ENCODE measurements at regions of chr2 and their contacts with region 1.

Region 1: DNA sequence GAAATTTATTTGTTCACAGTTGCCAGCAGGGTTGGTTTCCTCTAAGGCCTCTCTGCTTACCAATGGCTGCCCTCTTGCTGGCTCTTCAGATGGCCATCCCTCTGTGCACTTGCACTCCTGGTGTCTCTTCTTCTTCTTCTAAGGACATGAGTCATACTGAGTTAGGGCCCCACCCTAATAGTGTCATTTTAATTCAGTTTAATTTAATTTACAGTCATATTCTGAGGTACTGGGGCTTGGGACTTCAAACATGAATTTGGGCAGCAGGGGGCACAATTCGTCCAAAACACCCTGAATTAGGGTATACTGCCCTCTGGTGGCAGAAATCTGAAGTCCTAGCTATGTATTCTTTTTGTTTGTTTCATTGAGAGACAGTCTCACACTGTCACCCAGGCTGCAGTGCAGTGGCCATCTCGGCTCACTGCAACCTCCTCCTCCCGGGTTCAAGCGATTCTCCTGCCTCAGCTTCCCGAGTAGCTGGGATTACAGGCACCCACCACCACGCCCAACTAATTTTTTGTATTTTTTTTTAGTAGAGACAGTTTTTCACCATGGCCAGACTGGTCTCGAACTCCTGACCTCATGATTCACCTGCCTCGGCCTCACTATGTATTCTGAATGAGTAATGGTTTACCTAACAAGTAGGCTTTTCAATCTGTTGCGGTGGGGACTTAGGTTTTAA is 19.8 kb downstream of the SLC4A1AP start:
- DNase-seq: peak; percentile 70 to 93
- H3K4me3 ChIP-seq: no peak overlapping the region
- H3K27ac ChIP-seq: no peak overlapping the region
- H3K4me1 ChIP-seq: no peaks in the 10 kb centered on the region
- H3K27me3 ChIP-seq: no peaks in the 10 kb centered on the region
- CTCF ChIP-seq: peak; percentile 35 to 100 (median 96)
- EP300 ChIP-seq: no peak
- POLR2A ChIP-seq: no peak
- RAD21 ChIP-seq: peak; percentile 68 to 77

Region 2: DNA sequence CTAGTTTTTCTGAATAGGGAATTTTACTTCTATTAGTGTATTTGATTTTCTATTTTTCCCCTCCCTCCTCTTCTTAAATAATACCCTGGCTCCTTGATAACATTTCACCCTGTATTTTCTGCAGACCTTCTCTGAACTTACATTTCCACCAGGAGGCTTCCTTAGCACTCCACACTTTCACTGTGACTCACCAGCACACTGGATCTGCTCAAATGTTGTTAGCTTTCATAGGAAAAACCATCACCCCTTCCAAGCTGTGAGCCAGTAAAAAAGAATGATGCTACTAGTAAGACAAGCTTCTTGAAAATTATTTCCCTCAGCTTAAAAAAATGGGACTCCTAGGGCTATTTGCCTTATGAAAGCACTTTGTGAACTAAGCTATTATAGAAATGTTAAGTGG is 36.2 kb before region 1 on chr2:
- CTCF ChIA-PET with region 1: interaction called, 22 read pairs
- POLR2A ChIA-PET with region 1: interaction called, 3 read pairs
- DNase-seq: no peak
- H3K4me3 ChIP-seq: no peak overlapping the region
- H3K27ac ChIP-seq: no peak overlapping the region
- H3K4me1 ChIP-seq: no peaks in the 10 kb centered on the region
- H3K27me3 ChIP-seq: no peaks in the 10 kb centered on the region
- CTCF ChIP-seq: no peak
- EP300 ChIP-seq: no peak
- POLR2A ChIP-seq: no peak
- RAD21 ChIP-seq: no peak

Region 3: GRCh38 chr2:27663463-27664249 is 19.9 kb before region 1 on chr2 and contains the starts of genes SLC4A1AP and SUPT7L:
- CTCF ChIA-PET with region 1: interaction called, 34 read pairs
- POLR2A ChIA-PET with region 1: interaction called, 3 read pairs
- DNase-seq: peak; percentile 21 to 87
- H3K4me3 ChIP-seq: peak within 1 kb of the TSS; percentile 50 to 100 (median 88)
- H3K27ac ChIP-seq: peak within 1 kb of the TSS; percentile 95
- H3K4me1 ChIP-seq: peaks cover 0 to 1% (median 0%) of the 10 kb centered on the region in 4 experiments; a peak in 2 of 7 replicates
- H3K27me3 ChIP-seq: no peaks in the 10 kb centered on the region
- CTCF ChIP-seq: peak in 1 of 3 experiments; percentile 5; a peak in 1 of 4 replicates
- EP300 ChIP-seq: no peak
- POLR2A ChIP-seq: peak; percentile 47 to 88
- RAD21 ChIP-seq: no peak
- total RNA-seq, gene SLC4A1AP: 18.4 and 18.8 TPM in 2 replicates
- total RNA-seq, gene SUPT7L: 21.8 and 22.2 TPM in 2 replicates

Region 4: DNA sequence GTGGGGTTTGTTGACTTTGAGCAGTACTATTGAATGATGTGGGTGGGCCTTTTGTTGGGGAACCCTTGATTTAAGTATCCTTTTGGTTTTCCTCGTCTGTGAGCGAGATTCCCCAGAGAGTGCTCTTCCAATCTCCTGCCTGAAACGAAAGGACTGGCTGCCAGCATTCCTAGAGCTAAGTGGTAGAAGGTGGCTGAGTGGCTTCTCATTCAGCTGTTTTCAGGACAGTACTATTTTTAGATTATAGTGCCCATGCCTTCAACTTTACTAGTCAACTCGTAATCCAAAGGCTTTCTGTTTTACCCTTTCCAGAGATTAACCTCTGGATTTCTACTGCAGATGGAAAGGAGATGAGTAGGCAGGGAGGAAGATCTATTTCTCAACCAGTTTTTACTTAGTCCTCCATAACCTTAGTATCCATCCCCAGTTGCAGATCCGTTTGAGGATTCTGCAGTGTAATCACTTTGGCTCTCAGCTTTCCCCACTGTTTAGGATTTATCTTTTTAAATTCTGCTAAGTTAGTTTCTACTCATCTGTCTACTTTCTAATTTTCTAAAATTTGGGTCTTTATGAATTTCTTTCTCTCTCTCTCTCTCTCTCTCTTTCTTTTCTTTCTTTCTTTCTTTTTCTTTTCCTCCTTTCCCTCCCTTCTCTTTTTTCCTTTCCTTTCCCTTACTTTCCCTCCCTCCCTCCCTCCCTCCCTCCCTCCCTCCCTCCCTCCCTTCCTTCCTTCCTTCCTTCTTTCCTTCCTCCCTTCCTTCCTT is 10.6 kb before region 1 on chr2:
- CTCF ChIA-PET with region 1: interaction called, 25 read pairs
- POLR2A ChIA-PET with region 1: interaction called, 5 read pairs
- DNase-seq: no peak
- H3K4me3 ChIP-seq: no peak overlapping the region
- H3K27ac ChIP-seq: no peak overlapping the region
- H3K4me1 ChIP-seq: no peaks in the 10 kb centered on the region
- H3K27me3 ChIP-seq: peaks cover 0 to 1% (median 0%) of the 10 kb centered on the region in 4 experiments; a peak in 1 of 7 replicates
- CTCF ChIP-seq: no peak
- EP300 ChIP-seq: no peak
- POLR2A ChIP-seq: no peak
- RAD21 ChIP-seq: no peak

Region 5: DNA sequence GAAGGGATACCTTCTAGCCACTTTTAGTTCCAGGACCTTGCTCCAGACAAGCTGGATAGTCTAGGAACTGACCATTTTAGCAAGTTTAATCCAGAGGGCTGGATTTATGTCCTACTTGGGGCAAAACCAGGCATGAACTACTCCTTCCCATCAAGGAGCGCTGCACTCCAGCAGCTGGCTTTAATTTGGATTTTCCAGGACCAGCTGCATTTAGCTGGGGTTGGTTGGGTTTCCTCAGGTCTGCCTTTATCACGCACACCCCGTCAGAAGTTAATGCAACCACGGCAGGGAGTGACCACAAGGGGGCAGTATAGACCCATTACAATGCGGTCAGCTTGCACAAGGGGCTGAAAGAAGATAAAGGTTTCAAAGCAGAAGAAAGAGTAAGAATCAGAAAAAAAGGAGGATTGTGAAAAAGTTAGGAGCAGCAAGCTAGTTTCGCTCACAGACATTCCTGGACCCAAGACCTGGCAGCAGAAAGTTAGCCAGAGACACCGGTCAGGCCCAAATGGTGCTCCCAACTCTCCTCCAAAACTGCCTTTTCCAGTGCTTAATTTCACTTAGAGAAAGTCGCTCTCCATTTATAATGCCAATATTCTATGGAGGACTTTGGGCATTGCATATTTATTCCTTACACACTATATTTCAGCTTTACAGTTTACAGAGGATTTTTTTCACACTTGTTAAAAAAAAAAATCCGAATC is 20.3 kb after region 1 on chr2:
- CTCF ChIA-PET with region 1: interaction called, 22 read pairs
- POLR2A ChIA-PET with region 1: no interaction called
- DNase-seq: peak; percentile 77 to 94
- H3K4me3 ChIP-seq: no peak overlapping the region
- H3K27ac ChIP-seq: no peak overlapping the region
- H3K4me1 ChIP-seq: peaks cover 0 to 4% (median under 1%) of the 10 kb centered on the region in 4 experiments; a peak in 3 of 7 replicates
- H3K27me3 ChIP-seq: no peaks in the 10 kb centered on the region; a peak in 1 of 7 replicates
- CTCF ChIP-seq: peak; percentile 88 to 96 (median 89)
- EP300 ChIP-seq: no peak
- POLR2A ChIP-seq: no peak
- RAD21 ChIP-seq: peak; percentile 91 to 93

Region 6: GRCh38 chr2:27715318-27716210 is 32.0 kb after region 1 on chr2:
- CTCF ChIA-PET with region 1: interaction called, 10 read pairs
- POLR2A ChIA-PET with region 1: no interaction called
- DNase-seq: peak in 1 of 2 experiments; percentile 66
- H3K4me3 ChIP-seq: peak overlapping the region; percentile 79 to 97 (median 82)
- H3K27ac ChIP-seq: peak overlapping the region; percentile 29; the same call in 1 of the 2 replicates
- H3K4me1 ChIP-seq: peaks cover 3 to 15% (median 6%) of the 10 kb centered on the region in 4 experiments
- H3K27me3 ChIP-seq: no peaks in the 10 kb centered on the region
- CTCF ChIP-seq: no peak
- EP300 ChIP-seq: no peak
- POLR2A ChIP-seq: no peak; a peak in 1 of 3 replicates
- RAD21 ChIP-seq: no peak

Region 7: DNA sequence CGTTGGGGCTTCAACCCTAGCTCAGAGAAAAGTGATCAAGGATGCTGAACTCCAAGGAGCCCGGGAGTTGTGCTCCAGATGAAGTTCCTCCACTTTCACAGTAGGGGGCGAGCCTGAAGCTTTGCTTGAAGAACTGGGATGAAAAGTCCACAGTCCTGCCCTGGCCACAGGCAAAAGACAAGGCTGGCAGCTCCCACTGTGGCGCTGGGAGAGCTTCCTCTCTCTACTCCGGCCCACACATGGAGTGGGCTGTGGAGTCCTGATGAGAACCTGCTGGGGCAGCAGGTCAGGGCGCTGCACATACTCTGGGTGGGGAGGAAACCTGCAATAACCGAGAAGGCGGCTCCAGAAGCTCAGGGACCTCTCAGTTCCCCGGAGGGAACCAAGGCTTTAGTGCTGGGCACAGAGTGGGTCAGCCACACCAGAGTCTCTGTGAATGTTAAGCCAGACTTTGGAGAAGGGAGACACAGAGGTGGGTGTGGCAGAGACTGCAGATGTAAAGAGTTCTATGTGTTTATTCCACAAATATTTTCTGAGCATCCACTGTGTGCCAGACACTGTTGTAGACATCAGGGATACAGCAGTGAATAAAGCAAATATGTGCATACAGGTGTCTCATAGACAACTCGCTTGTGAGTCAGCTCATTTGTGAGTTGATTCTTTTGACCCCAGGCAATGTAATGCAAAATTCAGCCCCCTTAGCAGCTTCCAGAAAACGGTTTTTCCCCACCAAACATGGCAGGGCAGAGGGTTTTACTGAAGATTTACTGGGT is 40.0 kb after region 1 on chr2:
- CTCF ChIA-PET with region 1: interaction called, 10 read pairs
- POLR2A ChIA-PET with region 1: no interaction called
- DNase-seq: peak in 1 of 2 experiments; percentile 81
- H3K4me3 ChIP-seq: no peak overlapping the region
- H3K27ac ChIP-seq: no peak overlapping the region
- H3K4me1 ChIP-seq: peaks cover 8 to 21% (median 10%) of the 10 kb centered on the region in 4 experiments
- H3K27me3 ChIP-seq: no peaks in the 10 kb centered on the region
- CTCF ChIP-seq: peak; percentile 51 to 84 (median 54)
- EP300 ChIP-seq: no peak
- POLR2A ChIP-seq: no peak
- RAD21 ChIP-seq: peak; percentile 62 to 64

Region 8: DNA sequence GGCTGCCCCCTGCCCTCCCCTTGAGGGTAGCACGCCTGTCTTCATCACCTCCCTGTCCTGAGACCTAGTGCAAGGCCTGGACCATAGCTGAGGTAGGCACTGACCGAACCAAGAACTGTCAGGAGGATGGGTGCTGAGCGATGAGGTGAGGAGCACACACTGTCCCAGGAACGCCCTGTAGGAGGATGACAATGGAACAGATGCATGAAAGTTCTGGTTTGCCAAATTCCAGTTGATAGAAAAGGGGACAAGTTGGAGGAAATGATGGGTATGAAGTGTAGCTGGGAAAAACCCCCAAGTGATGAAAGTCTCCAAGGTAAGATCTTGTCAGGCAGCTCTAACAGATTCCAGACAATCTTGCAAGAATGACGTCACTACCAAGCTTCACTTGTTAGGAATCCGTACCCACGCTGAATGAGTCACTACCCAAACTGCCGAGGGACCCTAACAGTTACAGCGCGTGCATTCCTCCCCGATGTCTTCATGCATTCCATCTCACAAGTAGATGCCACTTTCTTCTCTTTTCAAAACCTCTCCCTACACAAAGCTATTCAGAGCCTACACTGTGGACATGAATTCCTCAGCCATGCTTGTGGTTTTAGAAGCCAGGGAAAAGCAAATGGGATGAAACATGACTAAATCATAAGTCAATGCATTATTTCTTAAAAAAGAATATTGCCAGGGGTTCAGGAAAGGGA is 115.6 kb after region 1 on chr2:
- CTCF ChIA-PET with region 1: no interaction called
- POLR2A ChIA-PET with region 1: no interaction called
- DNase-seq: peak; percentile 34 to 88
- H3K4me3 ChIP-seq: no peak overlapping the region
- H3K27ac ChIP-seq: no peak overlapping the region
- H3K4me1 ChIP-seq: no peaks in the 10 kb centered on the region
- H3K27me3 ChIP-seq: no peaks in the 10 kb centered on the region
- CTCF ChIP-seq: no peak
- EP300 ChIP-seq: no peak
- POLR2A ChIP-seq: no peak
- RAD21 ChIP-seq: no peak

Region 9: GRCh38 chr2:27810455-27810854 is 126.9 kb after region 1 on chr2:
- CTCF ChIA-PET with region 1: no interaction called
- POLR2A ChIA-PET with region 1: no interaction called
- DNase-seq: no peak
- H3K4me3 ChIP-seq: no peak overlapping the region
- H3K27ac ChIP-seq: no peak overlapping the region
- H3K4me1 ChIP-seq: no peaks in the 10 kb centered on the region
- H3K27me3 ChIP-seq: peaks cover 0 to 1% (median 0%) of the 10 kb centered on the region in 4 experiments; a peak in 1 of 7 replicates
- CTCF ChIP-seq: no peak
- EP300 ChIP-seq: no peak
- POLR2A ChIP-seq: no peak
- RAD21 ChIP-seq: no peak